CD4-positive, alpha-beta T cell (primary cell): ENCODE measurements at regions of chr5 and their contacts with region 1.

Region 1: GRCh38 chr5:108748401-108749127 is 867 bp downstream of the FER start:
- DNase-seq: peak; percentile 92 to 99 (median 96)
- ATAC-seq: peak; percentile 91
- H3K4me3 ChIP-seq: peak overlapping the region; percentile 98
- H3K4me3 Mint-ChIP-seq: peak overlapping the region; percentile 96
- H3K27ac ChIP-seq: peak overlapping the region; percentile 91 to 92
- H3K27ac Mint-ChIP-seq: peak overlapping the region; percentile 91
- H3K4me1 ChIP-seq: peaks cover 18% of the 10 kb centered on the region
- H3K4me1 Mint-ChIP-seq: peaks cover 21% of the 10 kb centered on the region
- H3K27me3 ChIP-seq: peaks cover 0 to 5% of the 10 kb centered on the region in 2 experiments
- H3K27me3 Mint-ChIP-seq: peaks cover 4% of the 10 kb centered on the region
- CTCF ChIP-seq: no peak

Region 2: GRCh38 chr5:108727651-108728565 is 20.7 kb before region 1 on chr5:
- CTCF ChIA-PET with region 1: no interaction called
- POLR2A ChIA-PET with region 1: interaction called, 18 read pairs
- intact Hi-C with region 1: loop called (anchors 1 to 2 kb)
- DNase-seq: peak; percentile 5 to 68 (median 26)
- ATAC-seq: peak; percentile 61
- H3K4me3 ChIP-seq: peak overlapping the region; percentile 89
- H3K4me3 Mint-ChIP-seq: peak overlapping the region; percentile 82
- H3K27ac ChIP-seq: peak overlapping the region; percentile 39 to 48
- H3K27ac Mint-ChIP-seq: peak overlapping the region; percentile 63
- H3K4me1 ChIP-seq: peaks cover 19% of the 10 kb centered on the region
- H3K4me1 Mint-ChIP-seq: peaks cover 22% of the 10 kb centered on the region
- H3K27me3 ChIP-seq: peaks cover 4 to 22% of the 10 kb centered on the region in 2 experiments
- H3K27me3 Mint-ChIP-seq: peaks cover 35% of the 10 kb centered on the region
- CTCF ChIP-seq: no peak